ENCODE measurements at regions of chr21 and their contacts with region 1.

Region 1: DNA sequence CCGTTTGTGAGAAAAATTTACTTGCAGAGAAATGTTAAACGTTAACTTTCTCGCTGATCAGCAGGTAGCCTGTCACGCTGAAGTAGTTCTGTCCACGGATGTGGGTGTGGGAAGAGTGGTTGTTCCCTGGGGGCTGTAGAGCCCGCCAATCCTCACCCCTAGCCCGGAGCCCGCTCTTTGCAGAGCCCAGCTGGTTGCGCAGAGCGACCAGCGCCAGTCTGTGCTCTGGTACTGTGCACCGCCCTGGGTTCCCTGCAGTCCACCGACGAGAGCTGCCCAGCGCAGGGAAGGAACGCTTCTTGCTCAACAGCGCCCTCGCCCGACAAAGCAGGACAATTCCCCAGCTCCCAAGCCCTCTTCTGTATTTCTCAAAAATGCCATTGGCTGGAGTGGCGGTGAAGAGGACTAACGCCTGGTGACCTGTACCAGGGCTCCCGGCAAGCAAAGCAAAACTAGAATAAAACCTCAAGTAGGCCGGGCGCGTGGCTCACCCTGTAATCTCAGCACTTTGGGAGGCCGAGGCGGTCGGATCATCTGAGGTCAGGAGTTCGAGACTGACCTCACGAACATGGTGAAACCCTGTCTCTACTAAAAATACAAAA is 3.3 kb downstream of the RIPPLY3 start:
- DNase-seq: peak; percentile 69
- H3K4me3 Mint-ChIP-seq: peak overlapping the region; percentile 63
- H3K27ac Mint-ChIP-seq: no peak overlapping the region
- H3K4me1 Mint-ChIP-seq: peaks cover 12% of the 10 kb centered on the region
- H3K27me3 Mint-ChIP-seq: peaks cover 27% of the 10 kb centered on the region

Region 2: GRCh38 chr21:36630485-36631206 is 379.2 kb before region 1 on chr21:
- intact Hi-C with region 1: loop called (anchors 5 kb)
- DNase-seq: peak; percentile 30
- H3K4me3 Mint-ChIP-seq: no peak overlapping the region
- H3K27ac Mint-ChIP-seq: no peak overlapping the region
- H3K4me1 Mint-ChIP-seq: no peaks in the 10 kb centered on the region
- H3K27me3 Mint-ChIP-seq: peaks cover 6% of the 10 kb centered on the region

Region 3: DNA sequence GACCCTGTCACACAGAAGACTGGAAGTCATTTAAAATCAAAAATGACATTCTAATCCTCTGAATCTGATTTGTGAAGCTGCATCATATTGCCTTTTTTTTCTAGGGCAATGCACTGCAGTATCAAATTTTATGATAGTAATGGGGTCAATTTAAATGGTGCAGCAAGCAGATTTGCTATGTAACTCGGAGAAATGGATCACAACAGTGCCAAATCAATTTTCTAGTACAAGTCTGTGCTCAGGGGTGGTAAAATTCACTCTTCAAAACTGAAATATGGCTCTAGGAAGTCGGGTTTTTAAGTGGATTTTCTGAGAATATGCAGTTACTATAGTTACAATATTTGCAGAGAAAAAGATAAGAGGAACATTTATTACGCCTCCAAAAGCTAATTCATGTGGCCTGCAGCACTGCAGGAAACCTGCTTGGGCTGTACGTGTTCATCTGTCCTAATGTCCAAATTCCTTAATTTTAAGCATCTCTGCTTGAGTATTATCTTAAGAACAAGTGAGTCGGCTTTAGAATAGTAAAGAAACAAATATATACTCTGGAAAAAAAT is 74.9 kb before region 1 on chr21:
- intact Hi-C with region 1: loop called (anchors 1 kb)
- DNase-seq: no peak
- H3K4me3 Mint-ChIP-seq: no peak overlapping the region
- H3K27ac Mint-ChIP-seq: no peak overlapping the region
- H3K4me1 Mint-ChIP-seq: peaks cover 4% of the 10 kb centered on the region
- H3K27me3 Mint-ChIP-seq: no peaks in the 10 kb centered on the region

Region 4: DNA sequence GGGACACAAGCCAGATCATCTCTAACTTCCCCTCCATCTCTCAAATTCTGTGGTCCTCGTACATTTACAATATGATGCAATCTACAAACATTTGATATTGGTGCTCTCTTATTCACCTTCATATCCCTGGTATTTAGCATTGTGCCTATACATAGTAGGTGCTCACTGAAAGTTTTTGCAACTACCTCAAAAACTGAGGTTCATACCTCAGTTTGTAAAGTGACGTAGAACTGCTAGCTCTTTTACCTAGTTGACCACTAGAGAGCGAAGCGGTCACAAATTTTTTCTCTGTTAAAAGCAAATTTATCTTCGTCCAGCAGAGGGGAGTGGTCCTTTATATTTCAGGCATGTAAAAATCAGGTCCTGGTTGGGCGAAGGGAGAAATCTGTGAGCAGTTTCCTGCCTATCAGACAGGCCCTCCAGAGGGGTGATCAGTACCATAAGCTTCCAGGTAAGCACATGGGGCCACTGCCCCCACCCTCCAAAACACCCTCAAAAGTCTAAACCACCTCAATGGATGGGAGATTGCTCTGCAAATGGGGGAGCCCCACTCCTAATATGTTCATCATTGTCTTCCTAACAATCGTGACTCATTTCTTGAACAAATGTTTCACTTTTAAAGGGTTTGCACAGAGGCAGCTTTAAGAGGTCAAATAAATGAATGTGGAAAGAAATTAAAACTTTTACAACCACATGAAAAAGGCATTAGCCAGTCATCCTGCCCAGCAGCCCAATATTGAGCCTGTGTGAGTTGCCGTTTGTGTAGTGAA is 32.8 kb before region 1 on chr21:
- intact Hi-C with region 1: loop called (anchors 1 kb)
- DNase-seq: no peak
- H3K4me3 Mint-ChIP-seq: no peak overlapping the region
- H3K27ac Mint-ChIP-seq: peak overlapping the region; percentile 8
- H3K4me1 Mint-ChIP-seq: peaks cover 23% of the 10 kb centered on the region
- H3K27me3 Mint-ChIP-seq: peaks cover 5% of the 10 kb centered on the region

Region 5: DNA sequence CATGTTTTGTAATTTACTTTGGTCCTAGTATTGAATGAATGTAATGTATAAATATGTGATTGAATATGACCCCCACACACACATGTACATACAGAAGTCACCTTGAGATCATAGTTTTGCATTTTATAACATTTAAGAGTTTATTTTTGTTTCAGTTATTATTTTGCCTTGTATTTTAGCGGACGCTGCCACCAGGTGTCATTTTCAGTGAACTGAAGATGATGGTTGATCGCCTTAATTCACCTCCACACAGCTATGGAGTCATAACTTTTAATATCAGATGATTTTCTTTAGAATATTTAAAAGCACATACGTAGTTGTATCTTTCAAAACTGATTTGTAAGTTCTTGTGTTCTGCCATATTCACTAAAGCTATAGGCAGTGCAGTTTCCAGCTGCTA is 487.1 kb after region 1 on chr21:
- intact Hi-C with region 1: no loop called
- DNase-seq: no peak
- H3K4me3 Mint-ChIP-seq: no peak overlapping the region
- H3K27ac Mint-ChIP-seq: no peak overlapping the region
- H3K4me1 Mint-ChIP-seq: peaks cover 11% of the 10 kb centered on the region
- H3K27me3 Mint-ChIP-seq: no peaks in the 10 kb centered on the region

Measured in activated T-helper 1 cell treated with anti-CD3 and anti-CD28 coated beads, Interleukin-12 subunit alpha, Interleukin-12 subunit beta, Interleukin-2, Interleukin-4 antibody, amounts not matched to agents 30 ng/mL and 10 ng/mL and 1 ng/mL, durations not matched to agents 14 hours and 24 hours and 36 hours (primary cell).